HepG2 (cell line): ENCODE measurements at regions of chr1 and their contacts with region 1.

Region 1: DNA sequence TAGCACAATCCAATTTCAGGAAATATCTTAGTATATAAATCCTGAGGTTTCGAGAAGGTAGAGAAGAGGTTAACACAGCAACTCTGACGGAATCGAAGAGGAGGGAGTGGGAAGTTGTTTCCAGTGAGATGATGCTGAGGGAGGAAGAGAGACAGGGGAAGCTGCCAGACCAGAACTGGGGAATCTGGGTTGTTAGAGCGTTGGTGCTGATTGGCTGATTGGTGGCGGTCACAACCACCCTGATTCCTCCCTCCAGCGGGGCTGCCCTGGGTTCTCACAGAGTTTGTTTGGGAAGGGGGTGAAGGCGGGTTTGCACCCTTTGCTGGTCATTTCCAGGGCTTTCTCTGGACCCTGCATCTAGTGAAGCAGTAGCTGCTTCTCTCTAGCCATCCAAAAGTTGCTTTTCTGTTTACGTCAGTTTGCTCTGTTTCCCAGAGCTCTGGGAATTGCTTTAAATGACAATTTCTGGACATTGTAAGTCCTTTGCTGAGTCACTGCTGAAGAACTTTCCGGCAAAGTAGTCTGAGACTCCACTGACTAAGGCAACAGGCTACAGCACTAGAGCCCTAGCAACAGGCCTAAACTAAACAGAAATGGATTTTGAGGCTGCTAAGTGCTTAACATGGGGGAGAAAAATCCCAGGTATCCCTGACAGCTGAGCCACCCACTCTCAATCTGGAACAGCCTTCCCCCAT is 90.1 kb downstream of the TENT5C start:
- DNase-seq: no peak
- ATAC-seq: no peak
- H3K4me3 ChIP-seq: no peak overlapping the region
- H3K27ac ChIP-seq: no peak overlapping the region
- H3K4me1 ChIP-seq: no peaks in the 10 kb centered on the region
- H3K27me3 ChIP-seq: peaks cover 0 to 2% of the 10 kb centered on the region in 2 experiments; a peak in 1 of 5 replicates
- CTCF ChIP-seq: no peak
- EP300 ChIP-seq: no peak
- POLR2A ChIP-seq: no peak
- RAD21 ChIP-seq: no peak

Region 2: DNA sequence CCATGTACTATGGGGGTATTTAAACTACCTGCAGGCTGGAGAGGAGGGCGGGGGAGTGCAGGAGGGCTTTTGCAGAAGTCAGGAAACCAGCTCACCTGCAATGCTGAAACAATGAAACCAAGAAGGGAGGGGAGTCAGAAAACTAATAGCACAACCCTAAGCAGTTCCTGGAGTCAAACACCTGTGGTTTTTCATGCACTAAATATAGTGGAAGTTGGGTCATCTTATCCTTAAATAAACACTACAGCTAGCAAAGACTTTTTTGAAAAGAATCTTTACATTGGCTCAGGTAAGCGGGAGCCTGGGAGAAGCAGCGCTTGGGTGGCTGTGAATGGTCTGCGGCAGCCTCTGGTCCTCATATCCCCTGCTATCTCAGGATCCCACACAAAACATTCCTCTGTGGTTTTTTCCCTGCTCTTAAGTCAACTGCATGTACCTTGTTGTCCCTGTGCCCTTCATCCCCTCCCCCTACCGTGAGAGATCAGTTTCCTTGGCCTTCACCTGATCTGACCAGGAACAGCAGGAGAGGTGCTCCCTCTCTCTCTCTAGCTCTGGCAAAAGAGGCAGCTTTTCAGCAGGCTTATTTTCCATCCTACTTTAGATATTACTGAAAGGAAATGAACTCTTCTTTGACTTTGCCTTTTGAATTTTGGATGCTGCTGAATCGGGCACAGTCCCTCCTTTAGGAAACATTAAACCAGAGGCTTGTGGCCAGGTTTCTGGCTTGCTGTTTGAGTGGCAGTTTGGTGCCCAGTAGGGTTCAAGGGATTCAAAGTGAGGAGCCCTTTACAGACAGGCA is 63.5 kb before region 1 on chr1:
- CTCF ChIA-PET with region 1: no interaction called
- POLR2A ChIA-PET with region 1: no interaction called
- in situ Hi-C with region 1: no loop called
- intact Hi-C with region 1: loop called (anchors 10 kb)
- DNase-seq: no peak
- ATAC-seq: no peak
- H3K4me3 ChIP-seq: no peak overlapping the region
- H3K27ac ChIP-seq: no peak overlapping the region
- H3K4me1 ChIP-seq: no peaks in the 10 kb centered on the region
- H3K27me3 ChIP-seq: no peaks in the 10 kb centered on the region; a peak in 1 of 5 replicates
- CTCF ChIP-seq: no peak
- EP300 ChIP-seq: no peak
- POLR2A ChIP-seq: no peak
- RAD21 ChIP-seq: no peak